SK-N-SH (cell line): ENCODE measurements at regions of chr15 and their contacts with region 1.

Region 1: GRCh38 chr15:52078876-52079700 is 33.5 kb downstream of the BCL2L10 start:
- DNase-seq: peak; percentile 71
- H3K4me3 ChIP-seq: no peak overlapping the region; a peak in 1 of 4 replicates
- H3K27ac ChIP-seq: no peak overlapping the region
- H3K4me1 ChIP-seq: peaks cover 0 to 12% of the 10 kb centered on the region in 2 experiments; a peak in 1 of 4 replicates
- H3K27me3 ChIP-seq: no peaks in the 10 kb centered on the region
- CTCF ChIP-seq: peak; percentile 85
- EP300 ChIP-seq: no peak
- RAD21 ChIP-seq: peak; percentile 78

Region 2: DNA sequence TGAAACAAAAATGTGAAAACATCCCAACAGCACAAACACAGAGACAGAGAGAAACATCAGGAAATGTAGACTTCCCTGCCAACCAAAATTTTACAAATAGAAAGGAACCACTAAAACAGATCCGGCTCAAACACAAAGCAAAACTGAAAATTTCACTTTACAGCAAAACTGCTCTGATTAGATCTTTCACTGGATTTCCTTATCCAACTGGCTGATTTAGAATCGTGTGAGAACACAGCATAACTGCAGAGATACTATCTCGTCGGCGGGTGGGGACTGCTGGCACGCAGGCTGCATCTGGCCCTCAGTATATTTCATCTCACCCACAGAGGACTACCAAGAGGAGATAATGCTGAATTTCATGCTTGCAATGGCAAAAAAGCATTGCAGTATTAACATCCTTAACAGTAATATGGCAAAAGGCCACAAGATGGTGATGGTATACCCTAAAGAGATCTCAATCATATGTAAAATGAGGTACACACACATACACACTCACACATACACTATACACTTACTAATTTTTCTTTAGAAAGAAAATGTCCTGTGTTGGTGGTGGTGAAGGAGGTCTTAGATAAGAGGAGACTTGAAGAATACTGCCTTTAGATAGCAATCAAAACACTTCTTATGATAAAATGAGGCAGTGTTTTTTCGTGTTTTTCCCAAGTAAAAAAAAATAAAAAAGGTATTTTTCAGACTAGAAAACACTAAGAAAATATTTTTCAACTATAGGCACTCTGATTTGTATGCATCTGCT is 96.9 kb before region 1 on chr15:
- CTCF ChIA-PET with region 1: interaction called, 10 read pairs
- POLR2A ChIA-PET with region 1: no interaction called
- DNase-seq: peak; percentile 75
- H3K4me3 ChIP-seq: peak overlapping the region; percentile 22 to 58; a peak in 3 of 4 replicates
- H3K27ac ChIP-seq: peak overlapping the region; percentile 86 to 97
- H3K4me1 ChIP-seq: peaks cover 0 to 3% of the 10 kb centered on the region in 2 experiments; a peak in 2 of 4 replicates
- H3K27me3 ChIP-seq: no peaks in the 10 kb centered on the region
- CTCF ChIP-seq: peak; percentile 75
- EP300 ChIP-seq: peak; percentile 13 to 58; a peak in 3 of 4 replicates
- RAD21 ChIP-seq: peak; percentile 86

Region 3: DNA sequence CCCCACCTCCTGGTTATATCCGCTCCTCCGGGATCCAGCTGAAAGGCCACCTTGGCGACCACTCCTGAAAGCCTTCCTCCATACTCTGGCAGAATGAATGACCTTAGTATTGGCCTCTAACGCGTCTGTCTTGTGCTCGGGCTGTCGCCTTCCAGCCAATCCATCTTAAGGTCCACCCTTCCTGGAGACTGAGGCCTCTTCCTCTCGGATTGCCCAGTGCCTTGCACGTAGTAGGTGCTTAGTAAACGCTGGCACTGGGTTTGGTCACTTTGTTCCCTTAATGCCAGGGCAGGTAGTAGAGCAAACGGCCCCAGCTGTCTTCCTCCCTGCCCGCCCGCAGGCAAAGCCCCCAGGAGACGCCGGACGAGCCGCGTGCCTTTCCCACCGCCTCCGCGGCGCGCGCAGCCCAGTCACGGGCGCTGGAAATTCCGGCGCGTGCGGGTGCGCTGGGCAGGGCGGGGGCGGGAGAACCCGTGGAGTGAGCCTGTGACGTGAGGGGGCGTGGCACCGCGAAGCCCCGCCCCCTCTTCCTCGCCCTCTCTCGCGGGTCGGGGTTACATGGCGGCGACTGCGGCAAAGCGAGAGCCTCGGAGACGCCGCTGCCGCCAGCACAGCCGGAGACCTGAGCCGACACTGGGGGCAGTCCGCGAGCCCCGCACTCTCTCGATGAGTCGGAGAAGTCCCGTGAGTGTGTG is 60.2 kb before region 1 on chr15 and contains the start of gene MAPK6:
- CTCF ChIA-PET with region 1: interaction called, 14 read pairs
- POLR2A ChIA-PET with region 1: interaction called, 3 read pairs
- DNase-seq: peak; percentile 100
- H3K4me3 ChIP-seq: peak within 1 kb of the TSS; percentile 70 to 84
- H3K27ac ChIP-seq: peak within 1 kb of the TSS; percentile 90 to 97
- H3K4me1 ChIP-seq: peaks cover 10 to 11% of the 10 kb centered on the region in 2 experiments; a peak in 3 of 4 replicates
- H3K27me3 ChIP-seq: no peaks in the 10 kb centered on the region
- CTCF ChIP-seq: no peak
- EP300 ChIP-seq: no peak
- RAD21 ChIP-seq: no peak
- polyA plus RNA-seq, gene MAPK6: 16.9 and 23.0 TPM in 2 replicates

Region 4: DNA sequence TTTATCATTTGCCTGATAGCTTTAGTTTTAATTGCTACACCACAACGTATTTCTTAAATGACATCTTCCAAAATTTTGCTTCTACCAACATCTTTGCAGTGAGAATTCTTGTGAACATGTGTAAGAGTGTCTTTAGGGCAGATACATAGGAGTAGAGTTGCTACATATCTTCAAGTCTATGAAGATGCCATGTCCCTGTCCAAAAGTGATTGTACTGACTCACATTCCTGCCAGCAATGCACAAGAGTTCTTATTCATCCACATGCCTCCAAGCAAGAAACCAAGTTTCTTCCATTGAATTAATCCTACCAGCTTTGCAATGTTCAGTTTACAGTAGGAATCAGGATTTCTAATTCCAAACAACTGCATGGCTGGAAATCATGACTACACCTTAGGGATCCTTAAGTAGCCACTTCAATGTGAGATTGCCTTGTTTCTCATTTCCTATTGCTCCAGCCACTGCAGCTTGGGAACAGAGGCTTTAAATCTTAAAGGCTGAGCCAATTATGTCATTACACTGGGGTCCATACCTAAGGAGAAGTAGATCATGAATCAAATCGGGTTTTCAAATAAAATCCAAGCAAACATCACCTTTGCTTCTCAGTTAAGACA is 11.0 kb before region 1 on chr15:
- CTCF ChIA-PET with region 1: interaction called, 14 read pairs
- POLR2A ChIA-PET with region 1: interaction called, 3 read pairs
- DNase-seq: no peak
- H3K4me3 ChIP-seq: no peak overlapping the region
- H3K27ac ChIP-seq: peak overlapping the region in 1 of 2 experiments; percentile 3; a peak in 1 of 4 replicates
- H3K4me1 ChIP-seq: no peaks in the 10 kb centered on the region
- H3K27me3 ChIP-seq: no peaks in the 10 kb centered on the region
- CTCF ChIP-seq: no peak
- EP300 ChIP-seq: no peak
- RAD21 ChIP-seq: no peak